ENCODE measurements at regions of chr10 and their contacts with region 1.

Region 1: DNA sequence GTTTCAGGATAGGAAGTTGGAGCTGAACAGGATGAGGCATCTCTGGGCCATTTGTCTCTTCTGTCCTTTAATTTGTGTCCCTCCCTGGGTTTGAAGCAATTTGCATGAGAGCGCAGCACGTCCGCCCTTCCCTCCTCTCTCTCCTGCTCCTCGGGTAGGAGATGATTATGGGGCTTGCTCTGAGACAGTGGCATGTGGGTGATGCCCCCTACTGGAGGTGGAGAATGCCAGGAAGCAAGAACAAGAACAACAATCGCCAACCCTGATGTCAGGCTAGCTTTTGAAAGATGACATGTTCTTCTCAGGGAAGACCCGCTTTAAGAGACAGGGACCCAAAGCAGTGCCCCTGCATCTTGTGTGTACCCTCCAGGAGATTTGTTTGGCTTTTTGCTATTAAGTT is 63.9 kb upstream of the LOXL4 start:
- DNase-seq: peak; percentile 45 to 59 (median 51)
- H3K4me3 ChIP-seq: no peak overlapping the region
- H3K4me3 Mint-ChIP-seq: no peak overlapping the region
- H3K27ac ChIP-seq: no peak overlapping the region
- H3K27ac Mint-ChIP-seq: no peak overlapping the region
- H3K4me1 ChIP-seq: no peaks in the 10 kb centered on the region
- H3K4me1 Mint-ChIP-seq: peaks cover 5% of the 10 kb centered on the region
- H3K27me3 ChIP-seq: no peaks in the 10 kb centered on the region
- H3K27me3 Mint-ChIP-seq: peaks cover 4 to 9% (median 7%) of the 10 kb centered on the region in 3 donors
- CTCF ChIP-seq: peak; percentile 71

Region 2: DNA sequence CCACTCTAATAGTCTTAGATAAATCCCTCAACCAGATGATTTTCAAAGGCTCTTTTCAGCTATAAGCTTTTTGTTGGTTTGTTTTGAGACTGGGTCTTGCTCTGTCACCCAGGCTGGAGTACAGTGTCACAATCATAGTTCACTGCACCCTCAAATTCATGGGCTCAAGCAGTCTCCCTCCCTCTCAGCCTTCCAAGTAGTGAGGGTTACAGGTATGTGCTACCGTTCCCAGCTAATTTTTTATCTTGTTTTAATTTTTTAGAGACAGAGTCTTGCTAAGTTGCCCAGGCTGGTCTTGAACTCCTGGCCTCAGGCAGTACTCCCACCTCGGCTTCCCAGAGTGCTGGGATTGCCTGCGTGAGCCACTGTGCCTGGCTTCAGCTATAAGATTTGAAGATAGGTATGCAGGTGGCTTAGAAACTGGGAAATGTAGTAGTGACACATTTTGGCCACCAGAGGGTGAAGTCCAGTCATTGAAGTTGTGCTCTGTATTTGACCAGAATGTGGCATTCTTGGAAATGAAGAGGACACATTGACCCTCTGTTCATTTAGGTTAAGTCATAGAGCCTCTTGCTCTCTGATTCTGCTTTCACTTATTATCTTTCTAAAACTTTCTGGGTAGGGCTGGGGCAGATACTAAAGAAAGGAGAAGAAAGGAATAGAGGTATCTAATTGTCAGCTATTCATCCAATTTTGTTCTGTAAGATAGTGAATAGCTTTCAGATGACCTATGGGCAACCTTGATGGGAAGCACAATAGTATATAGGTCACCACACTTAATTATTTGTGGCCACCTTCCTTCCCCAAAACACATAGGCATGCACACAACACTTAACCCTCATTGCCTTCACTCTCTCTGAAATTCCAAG is 161.4 kb before region 1 on chr10:
- intact Hi-C with region 1: loop called in 1 of 2 experiments (anchors 10 kb)
- DNase-seq: peak; percentile 11 to 31 (median 27)
- H3K4me3 ChIP-seq: no peak overlapping the region
- H3K4me3 Mint-ChIP-seq: no peak overlapping the region
- H3K27ac ChIP-seq: no peak overlapping the region
- H3K27ac Mint-ChIP-seq: no peak overlapping the region
- H3K4me1 ChIP-seq: no peaks in the 10 kb centered on the region
- H3K4me1 Mint-ChIP-seq: no peaks in the 10 kb centered on the region
- H3K27me3 ChIP-seq: no peaks in the 10 kb centered on the region
- H3K27me3 Mint-ChIP-seq: no peaks in the 10 kb centered on the region
- CTCF ChIP-seq: peak; percentile 88

Region 3: DNA sequence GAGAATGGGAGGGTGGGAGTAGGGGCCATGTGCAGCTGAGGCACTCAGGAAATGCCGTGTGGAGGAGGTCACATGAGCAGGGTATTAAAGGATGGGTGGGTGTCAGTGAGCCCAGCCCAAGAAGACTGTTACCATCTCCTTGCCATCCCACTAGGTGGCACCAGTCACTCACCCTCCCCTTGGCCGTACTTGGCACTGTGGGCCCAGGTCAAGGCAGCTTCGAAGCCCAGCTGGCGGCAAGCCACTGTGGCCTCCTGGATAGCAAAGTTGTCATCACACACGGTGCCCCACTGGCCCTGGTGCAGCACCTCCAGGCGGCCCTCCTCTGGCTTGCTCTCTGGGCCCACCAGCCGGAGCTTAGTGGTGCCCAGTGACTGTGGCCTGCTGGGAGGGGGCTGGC is 69.3 kb before region 1 on chr10:
- intact Hi-C with region 1: loop called (anchors 2 to 10 kb)
- DNase-seq: peak; percentile 18 to 61 (median 46)
- H3K4me3 ChIP-seq: no peak overlapping the region
- H3K4me3 Mint-ChIP-seq: no peak overlapping the region
- H3K27ac ChIP-seq: no peak overlapping the region
- H3K27ac Mint-ChIP-seq: peak overlapping the region in 1 of 7 donors; percentile 57
- H3K4me1 ChIP-seq: peaks cover 22 to 30% of the 10 kb centered on the region in 2 donors
- H3K4me1 Mint-ChIP-seq: peaks cover 31% of the 10 kb centered on the region
- H3K27me3 ChIP-seq: peaks cover 4 to 12% of the 10 kb centered on the region in 2 donors
- H3K27me3 Mint-ChIP-seq: peaks cover 10 to 26% (median 15%) of the 10 kb centered on the region in 3 donors
- CTCF ChIP-seq: peak; percentile 72

Region 4: GRCh38 chr10:98295907-98296306 is 36.0 kb before region 1 on chr10:
- intact Hi-C with region 1: loop called in 1 of 2 experiments (anchors 1 kb)
- DNase-seq: no peak
- H3K4me3 ChIP-seq: peak overlapping the region in 2 of 3 experiments; percentile 14 to 54
- H3K4me3 Mint-ChIP-seq: peak overlapping the region; percentile 72 to 82
- H3K27ac ChIP-seq: peak overlapping the region in 1 of 2 donors; percentile 60
- H3K27ac Mint-ChIP-seq: peak overlapping the region in 6 of 7 donors; percentile 16 to 83 (median 45)
- H3K4me1 ChIP-seq: peaks cover 12 to 13% of the 10 kb centered on the region in 2 donors
- H3K4me1 Mint-ChIP-seq: peaks cover 15% of the 10 kb centered on the region
- H3K27me3 ChIP-seq: peaks cover 2 to 8% of the 10 kb centered on the region in 2 donors
- H3K27me3 Mint-ChIP-seq: peaks cover 1 to 25% (median 23%) of the 10 kb centered on the region in 3 donors
- CTCF ChIP-seq: no peak

Region 5: DNA sequence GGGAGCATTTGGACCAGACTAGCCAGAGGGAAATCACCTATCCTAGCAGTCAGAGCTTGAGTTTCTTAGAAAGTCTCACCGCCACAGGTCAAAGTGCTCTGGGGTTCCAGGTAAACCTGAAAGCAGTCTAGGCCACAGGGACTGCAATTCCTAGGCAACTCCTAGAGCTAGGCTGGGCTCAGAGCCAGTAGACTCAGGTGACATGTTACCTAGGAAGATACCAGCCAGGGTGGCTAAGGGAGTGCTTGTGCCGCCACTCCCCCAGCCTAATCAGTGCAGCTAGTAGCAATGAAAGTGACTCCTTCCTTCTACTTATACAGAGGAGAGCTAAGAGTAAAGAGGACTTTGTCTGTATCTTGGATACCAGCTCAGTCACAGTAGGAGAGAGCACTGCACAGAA is 463.6 kb after region 1 on chr10:
- intact Hi-C with region 1: no loop called
- DNase-seq: no peak
- H3K4me3 ChIP-seq: no peak overlapping the region
- H3K4me3 Mint-ChIP-seq: no peak overlapping the region
- H3K27ac ChIP-seq: no peak overlapping the region
- H3K27ac Mint-ChIP-seq: no peak overlapping the region
- H3K4me1 ChIP-seq: no peaks in the 10 kb centered on the region
- H3K4me1 Mint-ChIP-seq: no peaks in the 10 kb centered on the region
- H3K27me3 ChIP-seq: no peaks in the 10 kb centered on the region
- H3K27me3 Mint-ChIP-seq: peaks cover 0 to 3% (median 1%) of the 10 kb centered on the region in 3 donors
- CTCF ChIP-seq: no peak

Measured in CD14-positive monocyte (primary cell).